Activated CD8-positive, alpha-beta T cell treated with anti-CD3 and anti-CD28 coated beads, Interleukin-2, amount 10 ng/mL, durations not matched to agents 7 days and 5 days (primary cell): ENCODE measurements at regions of chr19 and their contacts with region 1.

Region 1: DNA sequence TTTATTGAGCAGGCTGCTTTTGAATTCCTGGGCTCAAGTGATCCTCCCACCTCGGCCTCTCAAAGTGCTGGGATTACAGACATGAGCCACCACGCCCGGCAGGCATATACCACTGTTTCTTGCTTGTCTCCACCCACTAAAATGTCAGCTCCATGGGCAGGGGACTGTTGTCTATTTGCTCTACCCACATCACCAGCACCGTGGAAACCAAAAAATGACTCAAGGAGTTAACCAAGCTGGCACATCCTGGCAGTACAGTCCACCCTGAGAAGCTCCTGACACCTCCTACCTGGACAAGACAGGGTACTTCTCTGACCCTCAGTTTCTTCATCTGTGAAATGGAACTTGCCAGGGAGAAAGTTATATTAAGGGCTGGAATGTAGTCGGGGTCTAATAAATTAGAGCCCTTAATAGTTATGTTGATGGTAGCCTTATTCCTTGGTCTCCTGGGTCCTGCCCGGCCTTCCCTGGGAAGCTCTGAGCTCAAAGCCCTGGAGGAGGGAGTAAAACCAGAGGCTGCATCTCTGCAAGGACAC is 13.9 kb downstream of the RDH8 start:
- DNase-seq: no peak
- ATAC-seq: no peak
- H3K4me3 Mint-ChIP-seq: no peak overlapping the region
- H3K27ac Mint-ChIP-seq: no peak overlapping the region
- H3K4me1 Mint-ChIP-seq: no peaks in the 10 kb centered on the region
- H3K27me3 Mint-ChIP-seq: peaks cover 10% of the 10 kb centered on the region

Region 2: DNA sequence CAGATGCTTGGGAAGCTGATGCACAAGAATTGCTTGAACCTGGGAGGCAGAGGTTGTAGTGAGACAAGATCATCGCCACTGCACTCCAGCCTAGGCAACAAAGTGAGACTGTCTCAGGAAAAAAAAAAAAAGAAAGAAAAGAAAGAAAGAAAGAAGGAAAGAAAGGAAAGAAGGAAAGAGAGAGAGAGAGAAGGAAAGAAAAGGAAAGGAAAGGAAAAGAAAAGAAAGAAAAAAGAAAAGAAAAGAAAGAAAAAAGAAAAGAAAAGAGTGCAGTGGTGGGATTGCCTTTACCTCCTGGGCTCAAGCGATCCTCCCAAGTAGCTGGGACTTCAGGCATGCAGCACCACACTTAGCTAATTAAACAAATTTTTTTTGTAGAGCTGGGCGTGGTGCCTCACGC is 103.8 kb before region 1 on chr19:
- CTCF ChIA-PET with region 1: interaction called, 10 read pairs
- POLR2A ChIA-PET with region 1: no interaction called
- DNase-seq: no peak
- ATAC-seq: no peak
- H3K4me3 Mint-ChIP-seq: no peak overlapping the region
- H3K27ac Mint-ChIP-seq: no peak overlapping the region
- H3K4me1 Mint-ChIP-seq: no peaks in the 10 kb centered on the region
- H3K27me3 Mint-ChIP-seq: peaks cover 4% of the 10 kb centered on the region